ENCODE measurements at regions of chr19 and their contacts with region 1.

Region 1: DNA sequence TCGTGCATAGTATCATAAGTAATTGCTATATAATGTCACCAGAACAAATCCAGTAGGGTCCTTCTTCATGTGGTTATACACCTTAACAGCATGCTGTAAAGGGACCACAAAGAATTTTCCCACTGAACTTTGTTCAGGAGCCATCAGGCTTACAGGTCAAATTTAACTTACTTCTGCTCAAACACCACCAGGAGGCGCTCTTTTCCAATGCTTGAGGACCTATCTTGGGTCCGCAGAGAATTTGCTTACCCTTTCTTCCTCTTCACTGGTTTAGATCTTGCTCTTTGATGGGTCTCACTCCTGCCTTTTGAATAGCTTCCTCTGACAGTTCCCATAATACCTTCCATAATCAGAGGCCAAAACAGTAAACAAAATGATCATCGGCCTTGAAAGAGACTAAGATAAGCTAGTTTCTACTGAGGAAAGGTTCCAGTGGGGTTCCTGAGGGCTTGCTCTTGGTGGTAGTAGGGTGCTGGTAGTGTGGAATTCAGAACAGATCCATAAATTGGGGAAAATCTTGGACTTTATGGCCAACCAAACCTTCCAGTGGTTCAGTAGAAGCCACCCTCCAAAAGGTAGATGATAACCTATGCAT is 37.4 kb downstream of the SCGB2B2 start:
- DNase-seq: peak; percentile 43
- CTCF ChIP-seq: peak; percentile 72

Region 2: GRCh38 chr19:34618410-34618809 is 21.2 kb before region 1 on chr19:
- CTCF ChIA-PET with region 1: interaction called, 14 read pairs
- POLR2A ChIA-PET with region 1: no interaction called
- DNase-seq: no peak
- CTCF ChIP-seq: no peak

Region 3: DNA sequence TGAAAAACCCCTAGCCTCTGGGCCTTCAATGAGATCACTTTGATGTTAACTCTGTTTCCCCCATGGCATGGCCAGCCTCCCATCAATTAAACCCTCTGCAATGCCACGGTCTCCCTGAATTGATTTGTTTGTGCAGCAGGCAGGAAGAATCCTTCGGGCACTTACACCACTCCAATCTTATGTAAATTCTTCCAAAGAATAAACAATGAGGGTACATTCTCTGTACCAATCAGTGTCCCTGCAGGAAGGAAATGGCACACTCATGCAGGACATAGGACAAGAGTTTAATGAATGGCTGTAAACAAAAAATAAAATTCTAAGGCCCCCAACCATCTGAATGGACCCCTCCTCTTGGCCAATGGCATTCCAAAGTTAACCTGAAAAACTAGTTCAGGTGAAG is 15.2 kb after region 1 on chr19:
- CTCF ChIA-PET with region 1: interaction called, 25 read pairs
- POLR2A ChIA-PET with region 1: no interaction called
- DNase-seq: no peak
- CTCF ChIP-seq: no peak

Region 4: GRCh38 chr19:34673590-34673989 is 34.0 kb after region 1 on chr19:
- CTCF ChIA-PET with region 1: interaction called, 10 read pairs
- POLR2A ChIA-PET with region 1: no interaction called
- DNase-seq: no peak
- CTCF ChIP-seq: no peak

Region 5: GRCh38 chr19:34712395-34713261 is 73.0 kb after region 1 on chr19:
- CTCF ChIA-PET with region 1: interaction called, 54 read pairs
- POLR2A ChIA-PET with region 1: no interaction called
- DNase-seq: peak; percentile 50
- CTCF ChIP-seq: peak; percentile 73

Measured in GM10248 (cell line).